Activated CD4-positive, alpha-beta T cell treated with anti-CD3 and anti-CD28 coated beads, Interleukin-2, amount 10 ng/mL, durations not matched to agents 24 days and 14 days (primary cell): ENCODE measurements at regions of chr17 and their contacts with region 1.

Region 1: GRCh38 chr17:41864836-41865595 is at the start of gene KLHL11:
- DNase-seq: peak; percentile 97
- H3K4me3 Mint-ChIP-seq: no peak within 1 kb of the TSS
- H3K27ac Mint-ChIP-seq: no peak within 1 kb of the TSS
- H3K4me1 Mint-ChIP-seq: peaks cover 39% of the 10 kb centered on the region
- H3K27me3 Mint-ChIP-seq: no peaks in the 10 kb centered on the region
- total RNA-seq, gene KLHL11: 22.6 and 22.8 TPM in 2 replicates

Region 2: GRCh38 chr17:41688699-41689496 is 176.1 kb before region 1 on chr17 and contains the start of gene EIF1:
- intact Hi-C with region 1: loop called (anchors 2 kb)
- DNase-seq: peak; percentile 100
- H3K4me3 Mint-ChIP-seq: peak within 1 kb of the TSS; percentile 97
- H3K27ac Mint-ChIP-seq: peak within 1 kb of the TSS; percentile 99
- H3K4me1 Mint-ChIP-seq: peaks cover 36% of the 10 kb centered on the region
- H3K27me3 Mint-ChIP-seq: no peaks in the 10 kb centered on the region
- total RNA-seq, gene EIF1: 837 and 858 TPM in 2 replicates

Region 3: DNA sequence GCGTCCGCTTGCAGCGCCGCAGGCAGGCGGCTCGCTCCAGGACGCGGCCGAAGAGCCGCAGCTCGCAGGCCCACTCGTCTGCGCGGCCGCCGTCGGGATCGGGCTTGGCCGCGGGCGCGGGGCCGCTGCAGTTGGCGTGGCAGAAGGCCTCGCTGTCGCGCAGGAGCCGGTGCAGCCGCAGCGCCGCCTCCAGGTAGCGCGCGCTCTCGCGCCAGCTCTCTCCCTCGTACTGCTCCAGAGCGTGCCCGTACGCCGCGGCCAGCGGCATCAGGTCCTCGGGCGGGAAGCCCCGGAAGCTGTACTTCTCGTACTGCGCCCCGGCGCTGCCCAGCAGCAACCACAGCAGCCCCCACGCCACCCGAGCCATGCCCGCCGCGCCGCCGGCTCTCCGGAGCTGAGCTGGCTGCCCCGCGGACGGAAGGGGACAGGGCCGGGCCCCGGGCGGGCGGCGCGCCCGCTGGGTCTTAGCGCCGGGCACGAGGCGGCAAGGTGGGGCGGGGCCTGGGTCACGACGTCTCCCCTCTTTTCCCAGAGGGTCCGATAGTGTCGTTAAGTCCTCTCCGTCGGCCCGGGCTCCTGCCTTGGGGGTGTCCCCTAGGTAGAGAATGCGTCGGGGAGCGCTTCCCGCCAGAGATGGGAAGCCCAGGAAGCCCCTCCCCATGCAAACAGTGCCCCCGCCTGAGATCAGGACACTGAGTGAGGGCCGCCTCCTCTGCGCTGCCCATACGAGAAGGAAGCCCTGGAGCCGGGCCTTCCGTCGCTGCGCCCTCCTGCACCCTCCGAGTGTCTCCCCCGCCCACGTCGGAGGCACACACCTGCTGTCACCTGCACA is 53.3 kb before region 1 on chr17 and contains the start of gene P3H4:
- intact Hi-C with region 1: loop called (anchors 1 kb)
- DNase-seq: peak; percentile 93
- H3K4me3 Mint-ChIP-seq: peak within 1 kb of the TSS; percentile 91
- H3K27ac Mint-ChIP-seq: peak within 1 kb of the TSS; percentile 78
- H3K4me1 Mint-ChIP-seq: peaks cover 12% of the 10 kb centered on the region
- H3K27me3 Mint-ChIP-seq: peaks cover 21% of the 10 kb centered on the region
- total RNA-seq, gene P3H4: 4.1 and 5.9 TPM in 2 replicates

Region 4: GRCh38 chr17:41918314-41919164 is 53.5 kb after region 1 on chr17 and contains the start of gene ACLY:
- intact Hi-C with region 1: loop called (anchors 1 kb)
- DNase-seq: peak; percentile 100
- H3K4me3 Mint-ChIP-seq: peak within 1 kb of the TSS; percentile 98
- H3K27ac Mint-ChIP-seq: peak within 1 kb of the TSS; percentile 95
- H3K4me1 Mint-ChIP-seq: peaks cover 26% of the 10 kb centered on the region
- H3K27me3 Mint-ChIP-seq: no peaks in the 10 kb centered on the region
- total RNA-seq, gene ACLY: 225 and 229 TPM in 2 replicates